ENCODE measurements at regions of chr20 and their contacts with region 1.

Region 1: GRCh38 chr20:63739130-63740069 is at the start of gene SLC2A4RG:
- DNase-seq: peak; percentile 68
- H3K4me3 Mint-ChIP-seq: peak within 1 kb of the TSS; percentile 87
- H3K27ac Mint-ChIP-seq: peak within 1 kb of the TSS; percentile 54
- H3K4me1 Mint-ChIP-seq: peaks cover 16% of the 10 kb centered on the region
- H3K27me3 Mint-ChIP-seq: no peaks in the 10 kb centered on the region
- total RNA-seq, gene SLC2A4RG: 105 to 129 TPM

Region 2: DNA sequence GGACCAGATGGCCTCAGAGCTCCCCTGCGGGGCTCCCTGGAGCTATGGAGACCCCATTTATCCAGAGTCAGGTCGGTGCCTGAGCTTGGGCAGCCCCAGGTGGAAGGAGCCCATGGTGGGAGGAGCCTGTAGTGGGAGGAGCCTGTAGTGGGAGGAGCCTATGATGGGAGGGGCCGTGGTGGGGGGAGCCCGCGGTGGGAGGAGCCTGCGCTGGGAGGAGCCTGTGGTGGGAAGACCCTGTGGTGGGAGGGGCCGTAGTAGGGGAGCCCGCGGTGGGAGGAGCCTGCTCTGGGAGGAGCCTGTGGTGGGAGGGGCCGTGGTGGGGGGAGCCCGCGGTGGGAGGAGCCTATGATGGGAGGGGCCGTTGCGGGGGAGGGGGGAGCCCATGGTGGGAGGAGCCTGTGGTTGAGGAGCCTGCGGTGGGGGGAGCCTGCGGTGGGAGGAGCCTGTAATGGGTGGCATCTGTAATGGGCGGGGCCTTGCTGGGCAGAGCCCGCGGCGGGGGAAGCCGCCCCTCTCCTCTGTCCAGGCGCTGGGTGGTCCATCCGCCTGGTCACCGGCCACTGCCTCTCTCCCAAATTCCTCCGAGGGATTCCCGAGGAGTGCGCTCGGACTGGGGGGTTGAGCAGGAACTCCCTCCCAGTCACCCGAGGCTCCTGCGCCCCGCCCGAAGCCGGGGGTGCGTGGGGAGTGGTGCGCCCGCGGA is 186.0 kb before region 1 on chr20:
- CTCF ChIA-PET with region 1: no interaction called
- POLR2A ChIA-PET with region 1: no interaction called
- DNase-seq: peak; percentile 81
- H3K4me3 Mint-ChIP-seq: peak overlapping the region; percentile 41
- H3K27ac Mint-ChIP-seq: peak overlapping the region; percentile 90
- H3K4me1 Mint-ChIP-seq: peaks cover 17% of the 10 kb centered on the region
- H3K27me3 Mint-ChIP-seq: peaks cover 14% of the 10 kb centered on the region

Region 3: DNA sequence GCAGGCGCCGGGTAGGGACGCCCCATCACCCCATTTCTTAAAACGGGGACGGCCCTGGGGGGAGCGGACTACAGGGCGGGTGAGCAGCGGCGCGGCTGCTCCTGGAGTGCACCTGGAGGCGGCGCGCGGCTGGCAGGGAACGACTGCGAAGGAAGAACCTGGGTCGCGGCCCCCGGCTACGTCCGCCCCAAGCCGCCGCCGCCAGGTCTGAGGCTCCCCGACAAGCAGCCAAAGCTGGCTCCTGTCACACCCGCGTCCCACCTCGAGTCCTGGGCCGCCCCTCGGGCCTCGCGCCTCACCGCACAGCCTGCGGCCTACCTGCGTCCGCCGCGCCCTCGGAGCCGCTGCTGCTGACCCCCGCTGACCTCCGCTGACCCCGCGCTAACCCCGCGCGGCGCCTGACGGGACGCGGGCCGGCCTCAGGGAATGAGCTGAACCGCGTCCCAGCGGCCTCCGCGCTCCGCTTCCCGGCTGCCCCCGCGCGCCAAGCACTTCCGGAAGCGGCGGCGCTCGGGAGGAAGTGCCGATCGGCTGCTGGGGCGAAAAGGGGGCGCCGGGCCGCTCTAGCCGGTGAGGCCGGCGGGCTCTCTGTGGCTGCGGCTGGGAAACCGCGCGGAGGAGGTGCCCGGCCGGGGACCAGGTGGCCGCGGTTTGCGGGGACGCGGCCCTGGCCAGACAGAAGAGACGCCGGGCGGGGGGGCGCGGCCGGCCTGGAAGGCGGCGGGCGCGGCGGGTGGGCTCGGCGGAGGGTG is 31.7 kb before region 1 on chr20 and contains the starts of genes ARFRP1 and ZGPAT:
- CTCF ChIA-PET with region 1: interaction called, 12 read pairs
- POLR2A ChIA-PET with region 1: interaction called, 4 read pairs
- DNase-seq: peak; percentile 88
- H3K4me3 Mint-ChIP-seq: peak within 1 kb of the TSS; percentile 89
- H3K27ac Mint-ChIP-seq: peak within 1 kb of the TSS; percentile 87
- H3K4me1 Mint-ChIP-seq: peaks cover 50% of the 10 kb centered on the region
- H3K27me3 Mint-ChIP-seq: no peaks in the 10 kb centered on the region
- total RNA-seq, gene ARFRP1: 52.7 to 64.5 TPM
- total RNA-seq, gene ZGPAT: 37.3 to 43.3 TPM

Region 4: GRCh38 chr20:63750807-63751470 is 11.5 kb after region 1 on chr20:
- CTCF ChIA-PET with region 1: interaction called, 27 read pairs
- POLR2A ChIA-PET with region 1: no interaction called
- DNase-seq: peak; percentile 77
- H3K4me3 Mint-ChIP-seq: peak overlapping the region; percentile 64
- H3K27ac Mint-ChIP-seq: peak overlapping the region; percentile 97
- H3K4me1 Mint-ChIP-seq: peaks cover 28% of the 10 kb centered on the region
- H3K27me3 Mint-ChIP-seq: peaks cover 2% of the 10 kb centered on the region

Region 5: GRCh38 chr20:63819224-63819921 is 80.0 kb after region 1 on chr20:
- CTCF ChIA-PET with region 1: no interaction called
- POLR2A ChIA-PET with region 1: no interaction called
- DNase-seq: no peak
- H3K4me3 Mint-ChIP-seq: no peak overlapping the region
- H3K27ac Mint-ChIP-seq: no peak overlapping the region
- H3K4me1 Mint-ChIP-seq: no peaks in the 10 kb centered on the region
- H3K27me3 Mint-ChIP-seq: peaks cover 3% of the 10 kb centered on the region